Mammary epithelial cell (primary cell): ENCODE measurements at regions of chr12 and their contacts with region 1.

Region 1: DNA sequence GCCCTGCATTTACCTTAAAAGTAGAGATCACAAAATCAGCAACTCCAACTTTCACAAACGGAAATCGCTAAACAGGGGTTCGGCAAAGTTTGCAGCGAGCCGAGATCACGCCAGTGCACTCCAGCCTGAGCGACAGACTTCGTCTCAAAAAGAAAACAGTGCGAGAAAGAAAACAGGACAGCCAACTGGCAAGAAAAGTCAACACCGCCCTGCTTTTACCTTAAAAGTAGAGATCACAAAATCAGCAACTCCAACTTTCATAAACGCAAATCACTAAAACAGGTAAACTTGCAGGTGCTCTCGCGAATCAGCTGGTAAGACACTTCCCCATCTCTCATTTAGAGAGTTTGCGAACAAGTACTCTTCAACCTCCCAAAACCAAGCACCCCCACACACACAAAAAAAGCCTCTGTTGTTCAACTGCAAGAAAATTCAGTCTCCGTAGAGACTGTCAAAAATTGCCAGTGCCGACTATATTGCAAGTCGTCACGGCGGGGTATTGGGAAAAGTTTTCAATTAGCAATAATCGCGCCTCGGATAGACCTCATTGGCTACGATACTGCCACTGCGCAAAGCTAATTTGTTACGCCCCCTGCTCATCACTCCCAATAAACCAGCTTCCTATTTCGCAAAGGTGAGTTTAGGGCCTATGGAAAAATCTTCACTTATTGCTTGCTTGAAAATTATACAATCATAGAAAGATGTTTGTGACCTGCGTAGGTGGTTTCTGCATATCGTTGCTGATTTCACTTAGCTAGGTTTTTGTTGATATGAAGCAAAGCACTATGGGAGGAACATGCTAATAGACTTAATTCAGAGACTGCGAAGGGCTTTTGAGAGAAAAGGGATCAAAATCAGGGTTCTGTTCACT is at the start of gene RNU4-1:
- DNase-seq: peak; percentile 99
- H3K4me3 ChIP-seq: peak within 1 kb of the TSS; percentile 11 to 51 (median 16)
- H3K27ac ChIP-seq: peak within 1 kb of the TSS; percentile 100
- H3K4me1 ChIP-seq: peaks cover 4% of the 10 kb centered on the region
- H3K27me3 ChIP-seq: no peaks in the 10 kb centered on the region
- CTCF ChIP-seq: no peak
- total RNA-seq, gene RNU4-1: under 0.01 to 1,952 TPM

Region 2: GRCh38 chr12:120116792-120117651 is 175.9 kb before region 1 on chr12:
- CTCF ChIA-PET with region 1: no interaction called
- dilution Hi-C with region 1: no loop called
- in situ Hi-C with region 1: no loop called
- intact Hi-C with region 1: loop called (anchors 1 kb)
- DNase-seq: peak; percentile 91
- H3K4me3 ChIP-seq: peak overlapping the region; percentile 61 to 97 (median 95)
- H3K27ac ChIP-seq: peak overlapping the region; percentile 76
- H3K4me1 ChIP-seq: peaks cover 25% of the 10 kb centered on the region
- H3K27me3 ChIP-seq: no peaks in the 10 kb centered on the region
- CTCF ChIP-seq: no peak

Region 3: GRCh38 chr12:120209851-120210250 is 83.0 kb before region 1 on chr12:
- CTCF ChIA-PET with region 1: interaction called, 22 read pairs
- dilution Hi-C with region 1: no loop called
- in situ Hi-C with region 1: no loop called
- intact Hi-C with region 1: no loop called
- DNase-seq: peak; percentile 65
- H3K4me3 ChIP-seq: no peak overlapping the region
- H3K27ac ChIP-seq: peak overlapping the region; percentile 31
- H3K4me1 ChIP-seq: peaks cover 16% of the 10 kb centered on the region
- H3K27me3 ChIP-seq: no peaks in the 10 kb centered on the region
- CTCF ChIP-seq: no peak

Region 4: GRCh38 chr12:120228291-120229070 is 64.4 kb before region 1 on chr12:
- CTCF ChIA-PET with region 1: interaction called, 10 read pairs
- dilution Hi-C with region 1: loop called (anchors 10 kb)
- in situ Hi-C with region 1: no loop called
- intact Hi-C with region 1: loop called (anchors 1 kb)
- DNase-seq: peak; percentile 61
- H3K4me3 ChIP-seq: peak overlapping the region in 2 of 3 experiments; percentile 6 to 19
- H3K27ac ChIP-seq: peak overlapping the region; percentile 95
- H3K4me1 ChIP-seq: peaks cover 92% of the 10 kb centered on the region
- H3K27me3 ChIP-seq: no peaks in the 10 kb centered on the region
- CTCF ChIP-seq: peak; percentile 77 to 91

Region 5: GRCh38 chr12:120317224-120318105 is 24.6 kb after region 1 on chr12:
- CTCF ChIA-PET with region 1: no interaction called
- dilution Hi-C with region 1: no loop called
- in situ Hi-C with region 1: no loop called
- intact Hi-C with region 1: loop called (anchors 1 kb)
- DNase-seq: peak; percentile 100
- H3K4me3 ChIP-seq: peak overlapping the region; percentile 65 to 69 (median 66)
- H3K27ac ChIP-seq: peak overlapping the region; percentile 55
- H3K4me1 ChIP-seq: peaks cover 4% of the 10 kb centered on the region
- H3K27me3 ChIP-seq: no peaks in the 10 kb centered on the region
- CTCF ChIP-seq: peak; percentile 39 to 61

Region 6: DNA sequence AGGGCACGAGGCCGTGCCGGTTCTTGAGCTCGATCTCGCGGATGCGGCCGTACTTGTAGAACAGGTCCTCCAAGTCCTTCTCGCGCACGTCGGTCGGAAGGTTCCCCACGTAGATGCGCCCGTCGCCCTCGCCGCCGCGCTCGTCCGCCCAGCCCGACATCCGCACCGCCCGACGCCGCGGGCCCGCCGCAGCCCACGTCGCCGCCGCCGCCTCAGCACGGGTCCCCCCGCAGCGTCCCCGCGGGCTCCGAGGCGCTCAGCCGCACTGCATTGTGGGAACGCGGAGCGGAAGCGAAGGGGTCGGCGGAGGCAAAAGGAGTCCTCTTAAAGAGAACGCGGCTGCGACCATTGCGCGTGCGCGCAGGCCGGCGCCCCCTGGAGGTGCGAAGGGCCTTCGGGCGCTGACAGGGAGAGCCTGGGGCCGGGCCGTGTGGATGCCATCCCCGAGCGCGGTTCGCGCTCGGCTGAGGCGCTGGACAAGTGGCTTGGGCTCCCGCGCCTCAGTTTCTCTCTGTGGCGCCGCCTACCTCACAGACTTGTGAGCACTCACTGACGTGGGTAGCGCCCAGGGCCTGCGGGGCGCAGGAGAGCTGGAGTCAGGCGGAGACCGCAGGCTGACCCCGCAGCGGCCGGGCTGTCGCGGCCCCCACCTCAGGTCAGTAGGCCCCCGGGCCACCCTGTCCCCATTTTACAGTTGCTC is 176.7 kb after region 1 on chr12 and contains the start of gene SRSF9:
- CTCF ChIA-PET with region 1: no interaction called
- dilution Hi-C with region 1: no loop called
- in situ Hi-C with region 1: no loop called
- intact Hi-C with region 1: no loop called
- DNase-seq: peak; percentile 91
- H3K4me3 ChIP-seq: peak within 1 kb of the TSS; percentile 79 to 92 (median 79)
- H3K27ac ChIP-seq: peak within 1 kb of the TSS; percentile 64
- H3K4me1 ChIP-seq: peaks cover 16% of the 10 kb centered on the region
- H3K27me3 ChIP-seq: no peaks in the 10 kb centered on the region
- CTCF ChIP-seq: peak; percentile 62 to 93
- total RNA-seq, gene SRSF9: 84.7 to 205 TPM